KBM-7 (cell line): ENCODE measurements at regions of chr1 and their contacts with region 1.

Region 1: GRCh38 chr1:152052606-152053005 is 15.8 kb upstream of the S100A11 start:
- DNase-seq: peak; percentile 84

Region 2: GRCh38 chr1:152182431-152182830 is 129.8 kb after region 1 on chr1:
- in situ Hi-C with region 1: loop called (anchors 5 kb)
- DNase-seq: peak; percentile 45

Region 3: DNA sequence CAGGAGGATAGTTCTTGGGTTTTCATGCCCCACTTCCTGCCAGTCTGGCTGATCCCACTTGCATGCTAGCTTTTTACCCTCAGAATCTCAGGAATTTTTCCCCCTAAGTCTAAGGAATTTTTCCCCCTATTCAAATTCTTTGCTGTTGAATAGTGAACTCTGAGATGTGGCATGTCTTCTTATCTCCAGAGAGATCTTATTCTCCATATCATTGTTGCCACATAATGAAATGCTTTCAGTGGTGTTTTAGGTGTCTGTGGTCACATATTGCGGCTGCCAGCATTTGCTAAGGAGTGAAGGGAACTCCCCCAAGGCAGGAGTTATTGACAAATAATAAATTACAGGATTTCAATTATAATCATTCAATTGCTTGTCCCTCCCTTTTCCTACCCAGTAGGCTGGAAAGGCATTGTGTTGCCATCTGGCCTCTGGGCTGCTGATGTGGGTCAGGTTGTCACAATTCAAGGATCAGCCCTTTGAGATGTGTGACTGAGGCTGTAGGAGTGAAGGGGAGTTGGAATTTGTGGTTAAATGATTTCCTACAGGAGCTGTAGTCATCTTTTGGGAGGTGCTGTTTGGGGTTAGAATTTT is 276.3 kb after region 1 on chr1:
- in situ Hi-C with region 1: no loop called
- DNase-seq: no peak

Region 4: DNA sequence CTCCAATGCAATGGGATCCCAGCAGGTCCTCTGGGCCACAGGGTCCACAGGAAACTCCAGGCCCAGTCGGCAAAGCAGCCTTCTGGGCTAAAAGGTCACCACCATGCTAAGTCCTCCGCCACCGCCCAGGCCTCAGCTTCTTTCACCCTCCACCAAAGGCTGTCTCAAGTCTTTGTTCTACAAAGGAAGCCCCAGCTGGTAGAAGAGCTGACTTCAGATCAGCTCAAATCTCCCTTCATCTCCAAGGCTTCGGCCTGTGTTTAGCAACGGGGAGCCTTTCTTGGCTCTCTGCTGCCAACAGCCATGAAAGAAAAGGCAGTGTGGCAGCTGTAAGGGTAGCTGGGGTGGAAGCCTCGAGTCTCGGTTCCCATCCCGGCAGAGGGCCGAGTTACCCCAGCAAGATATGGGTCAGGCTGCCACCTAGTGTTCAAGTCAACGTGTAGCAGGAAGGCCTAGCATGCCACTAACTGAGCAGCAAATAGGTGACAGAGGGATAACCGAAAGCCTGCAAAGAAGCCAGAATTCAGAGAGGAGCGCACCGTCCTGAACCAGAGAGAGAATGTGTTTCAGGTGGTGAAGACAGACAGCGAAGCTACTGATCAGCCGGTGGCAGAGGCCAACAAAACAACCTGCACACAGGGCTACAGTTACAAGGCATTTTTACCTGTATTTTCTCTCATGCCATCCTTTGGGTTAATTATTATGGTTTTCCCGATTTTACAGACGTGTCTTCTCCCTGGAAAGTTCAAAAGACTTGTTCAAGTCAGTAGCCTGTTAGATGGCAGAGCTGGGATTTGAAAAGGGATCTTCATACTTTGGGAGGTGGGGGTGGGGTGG is 388.2 kb after region 1 on chr1:
- in situ Hi-C with region 1: loop called (anchors 25 kb)
- DNase-seq: peak; percentile 73